ENCODE measurements at regions of chr9 and their contacts with region 1.

Region 1: GRCh38 chr9:95031711-95032461 is 285.6 kb downstream of the FANCC start:
- DNase-seq: no peak
- H3K4me3 ChIP-seq: no peak overlapping the region
- H3K27ac ChIP-seq: peak overlapping the region; percentile 43 to 52
- H3K4me1 ChIP-seq: peaks cover 10% of the 10 kb centered on the region
- H3K27me3 ChIP-seq: no peaks in the 10 kb centered on the region
- CTCF ChIP-seq: no peak
- POLR2A ChIP-seq: no peak

Region 2: DNA sequence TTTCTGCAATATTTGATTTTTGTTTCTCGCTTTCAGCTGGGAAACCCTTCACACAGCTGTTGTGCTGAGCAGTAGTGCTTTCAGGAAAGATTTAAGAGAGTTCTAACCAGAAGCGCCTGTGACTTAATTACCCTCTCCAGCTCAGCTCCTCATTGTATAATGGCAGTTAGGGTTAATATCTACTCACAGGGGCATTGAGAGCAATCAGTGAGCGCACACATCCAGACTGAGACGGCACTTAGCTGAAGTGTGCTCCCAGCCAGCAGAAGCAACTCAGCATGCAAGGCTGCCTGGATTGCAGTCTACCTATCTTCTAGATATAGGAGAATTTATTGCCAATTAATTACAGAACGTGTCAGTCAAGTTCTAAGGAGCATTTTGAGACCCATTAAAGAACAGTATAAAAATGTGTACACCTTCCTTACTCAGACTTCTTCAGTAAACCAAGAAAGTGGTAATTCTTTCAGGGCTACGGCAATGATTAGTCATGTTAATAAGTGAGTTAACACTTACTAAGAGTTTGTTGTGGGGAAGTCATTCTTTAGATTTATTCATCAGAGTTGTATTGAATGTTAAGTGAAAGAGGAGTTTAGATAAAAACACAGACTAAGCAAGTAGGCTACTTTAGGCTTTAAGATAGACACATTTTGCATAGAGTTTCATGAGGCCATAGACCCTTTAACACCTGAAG is 588.7 kb before region 1 on chr9:
- intact Hi-C with region 1: no loop called
- DNase-seq: no peak
- H3K4me3 ChIP-seq: no peak overlapping the region
- H3K27ac ChIP-seq: no peak overlapping the region
- H3K4me1 ChIP-seq: no peaks in the 10 kb centered on the region
- H3K27me3 ChIP-seq: no peaks in the 10 kb centered on the region
- CTCF ChIP-seq: no peak
- POLR2A ChIP-seq: no peak

Region 3: DNA sequence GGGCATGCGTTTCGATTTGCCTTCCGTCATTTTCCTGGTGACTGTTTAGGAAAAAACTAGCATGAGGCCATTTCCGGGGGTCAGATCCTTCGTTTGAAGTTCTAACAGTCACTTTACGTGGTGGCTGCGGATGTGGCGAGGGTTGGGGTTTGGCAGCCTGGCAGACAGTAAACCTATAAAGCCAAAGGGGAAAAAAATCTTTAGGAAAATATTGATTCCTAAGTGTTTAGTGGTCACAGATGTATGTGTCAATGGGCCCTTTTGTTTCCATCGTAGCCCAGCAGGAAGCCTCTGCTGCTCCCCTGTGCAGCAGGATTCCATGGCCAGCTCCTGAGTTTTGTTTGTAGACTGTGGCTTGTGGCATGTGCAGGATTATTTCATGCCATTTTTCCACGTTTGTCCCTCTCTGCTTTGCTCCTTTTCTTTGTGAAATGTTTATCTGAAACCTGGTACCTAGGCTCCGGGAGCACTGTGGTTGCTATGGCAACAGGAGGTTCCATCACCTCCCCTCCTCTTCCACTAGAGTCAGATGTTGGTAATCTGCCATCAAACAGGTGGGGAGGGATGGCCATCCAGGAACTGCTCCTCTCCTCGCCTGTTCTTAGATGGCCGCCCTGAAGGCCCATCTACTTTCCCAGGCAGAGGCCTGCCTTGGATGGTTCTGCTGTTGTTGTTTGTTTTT is 103.1 kb before region 1 on chr9:
- intact Hi-C with region 1: no loop called
- DNase-seq: no peak
- H3K4me3 ChIP-seq: no peak overlapping the region
- H3K27ac ChIP-seq: no peak overlapping the region
- H3K4me1 ChIP-seq: no peaks in the 10 kb centered on the region
- H3K27me3 ChIP-seq: no peaks in the 10 kb centered on the region
- CTCF ChIP-seq: no peak
- POLR2A ChIP-seq: no peak

Region 4: GRCh38 chr9:94980947-94981722 is 50.8 kb before region 1 on chr9:
- intact Hi-C with region 1: no loop called
- DNase-seq: no peak
- H3K4me3 ChIP-seq: no peak overlapping the region
- H3K27ac ChIP-seq: no peak overlapping the region
- H3K4me1 ChIP-seq: no peaks in the 10 kb centered on the region
- H3K27me3 ChIP-seq: no peaks in the 10 kb centered on the region
- CTCF ChIP-seq: no peak
- POLR2A ChIP-seq: no peak

Region 5: DNA sequence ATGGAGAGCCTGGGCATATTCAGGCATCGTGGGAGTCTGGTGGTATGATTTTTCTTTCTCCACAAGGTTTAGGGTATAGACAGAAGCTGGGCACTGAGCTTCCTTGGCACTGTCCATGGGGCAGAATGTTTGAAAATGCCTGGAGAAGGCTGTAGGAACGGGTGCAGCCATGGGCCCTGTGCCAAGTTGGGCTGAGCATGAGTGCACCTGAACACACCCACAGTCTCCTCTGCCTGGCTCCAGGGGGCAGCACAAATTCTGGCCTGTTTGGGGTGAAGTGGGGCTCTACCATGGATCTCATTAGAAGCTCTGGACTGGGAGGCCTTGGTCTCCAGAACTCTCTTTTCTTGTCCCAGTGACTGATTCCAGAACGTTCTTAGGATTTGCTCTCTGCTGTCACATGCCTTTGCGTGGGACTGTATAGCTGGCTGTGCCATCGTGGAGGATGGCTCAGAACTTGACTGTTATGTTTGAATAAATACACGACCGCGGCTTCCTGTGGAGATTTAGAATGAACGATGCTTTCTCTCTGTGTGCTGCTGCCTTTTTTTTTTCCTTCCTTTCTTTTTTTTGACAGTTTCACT is 55.9 kb after region 1 on chr9:
- intact Hi-C with region 1: loop called (anchors 10 kb)
- DNase-seq: no peak
- H3K4me3 ChIP-seq: no peak overlapping the region
- H3K27ac ChIP-seq: peak overlapping the region; percentile 32 to 77
- H3K4me1 ChIP-seq: peaks cover 37% of the 10 kb centered on the region
- H3K27me3 ChIP-seq: no peaks in the 10 kb centered on the region
- CTCF ChIP-seq: peak in 2 of 4 experiments; percentile 28 to 41
- POLR2A ChIP-seq: no peak

Measured in prostate gland (tissue), 2 donors.